GM23248 (cell line): ENCODE measurements at regions of chr14 and their contacts with region 1.

Region 1: DNA sequence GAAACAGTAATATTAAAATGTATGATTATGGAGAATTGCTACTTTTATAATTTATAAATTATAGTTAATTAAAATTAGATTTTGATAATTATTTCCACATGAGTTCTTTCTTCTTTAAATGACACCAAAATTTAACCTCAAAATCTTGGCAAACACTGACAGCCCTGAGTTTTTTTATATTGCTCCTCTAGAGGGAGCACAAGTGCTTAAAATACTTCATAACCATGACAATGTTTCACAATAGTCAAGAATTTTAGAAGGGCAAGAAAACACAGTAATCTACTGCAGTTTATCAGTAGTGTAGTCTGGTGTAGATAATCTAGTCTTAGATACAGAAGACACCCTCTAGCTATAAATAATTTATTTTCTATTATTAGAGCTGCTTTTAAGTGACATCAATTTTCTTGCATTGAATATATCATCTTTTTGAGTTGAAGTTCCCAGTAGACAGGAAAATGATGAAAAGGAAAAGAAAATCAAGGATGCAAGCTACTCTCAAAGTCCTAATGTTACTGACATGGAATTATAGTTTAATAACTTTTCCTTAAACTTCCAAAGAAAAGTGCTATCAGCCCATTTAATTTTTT is 14.3 kb upstream of the PTGER2 start:
- DNase-seq: peak; percentile 76
- H3K4me3 ChIP-seq: no peak overlapping the region
- H3K27ac ChIP-seq: no peak overlapping the region
- H3K4me1 ChIP-seq: no peaks in the 10 kb centered on the region
- H3K27me3 ChIP-seq: no peaks in the 10 kb centered on the region

Region 2: DNA sequence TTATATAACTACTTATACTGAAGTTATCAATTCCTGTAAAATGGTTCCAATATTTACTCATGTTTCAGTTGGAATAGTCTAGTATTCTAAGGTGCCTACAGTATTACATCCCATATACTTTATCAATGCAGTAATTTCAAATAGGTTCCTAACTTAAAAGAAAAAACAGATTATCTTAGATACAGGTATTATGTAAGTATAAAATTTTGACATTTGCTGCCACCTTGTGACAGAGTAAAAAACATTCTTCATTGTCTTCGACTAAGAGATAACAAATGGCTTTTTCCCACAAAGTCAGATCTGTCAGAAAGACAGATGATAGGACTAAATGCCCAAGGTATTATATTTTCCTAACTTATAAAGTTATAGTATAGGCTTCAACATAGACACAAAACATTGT is 173.8 kb after region 1 on chr14:
- in situ Hi-C with region 1: loop called (anchors 5 kb)
- DNase-seq: peak; percentile 45
- H3K4me3 ChIP-seq: no peak overlapping the region
- H3K27ac ChIP-seq: no peak overlapping the region
- H3K4me1 ChIP-seq: no peaks in the 10 kb centered on the region
- H3K27me3 ChIP-seq: no peaks in the 10 kb centered on the region